PC-9 (cell line): ENCODE measurements at regions of chr14 and their contacts with region 1.

Region 1: GRCh38 chr14:38197001-38197783 is 10.5 kb upstream of the SSTR1 start:
- DNase-seq: no peak
- H3K4me3 ChIP-seq: no peak overlapping the region
- H3K27ac ChIP-seq: no peak overlapping the region
- H3K4me1 ChIP-seq: no peaks in the 10 kb centered on the region
- H3K27me3 ChIP-seq: no peaks in the 10 kb centered on the region
- CTCF ChIP-seq: peak; percentile 77

Region 2: DNA sequence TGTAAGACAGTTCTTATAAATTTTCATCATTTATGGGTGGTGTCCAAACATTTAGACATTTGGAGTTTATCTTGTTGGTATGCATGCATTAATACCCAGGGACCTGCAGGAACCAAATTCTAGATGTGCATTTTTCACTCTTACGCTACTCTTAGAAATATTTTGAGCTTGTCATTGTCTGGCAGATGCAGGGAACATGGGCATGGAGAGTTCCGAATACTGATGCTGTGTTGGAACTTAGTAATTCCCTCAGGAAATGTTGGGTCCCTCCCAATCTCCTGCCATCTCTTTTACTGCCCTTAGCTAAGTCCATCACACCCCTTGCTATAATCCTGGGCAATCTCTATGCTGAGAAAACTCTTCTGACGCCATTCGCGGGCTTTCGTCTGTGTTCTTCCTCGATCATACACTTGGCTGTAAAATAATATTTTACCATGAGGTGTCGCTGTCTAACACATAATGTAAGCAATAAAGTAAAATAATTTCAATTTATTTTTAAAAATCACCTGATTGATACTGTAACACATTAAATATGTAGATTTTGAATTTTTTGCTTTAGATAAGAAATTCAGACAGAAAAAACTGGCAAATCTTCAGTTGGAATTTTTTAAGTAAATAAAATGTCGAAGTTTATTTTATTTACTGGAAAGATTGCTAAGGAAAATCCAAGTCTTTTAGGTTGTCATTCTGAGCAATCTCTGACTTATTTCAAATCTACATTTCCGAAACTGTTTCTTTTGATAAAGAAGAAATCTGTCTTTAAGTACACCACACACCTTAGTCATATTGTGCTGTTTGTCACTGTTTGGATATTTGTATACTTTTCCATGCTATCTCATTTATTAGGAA is 293.6 kb before region 1 on chr14:
- CTCF ChIA-PET with region 1: no interaction called
- POLR2A ChIA-PET with region 1: no interaction called
- intact Hi-C with region 1: loop called (anchors 2 kb)
- DNase-seq: peak in 1 of 2 experiments; percentile 1
- H3K4me3 ChIP-seq: no peak overlapping the region
- H3K27ac ChIP-seq: no peak overlapping the region
- H3K4me1 ChIP-seq: no peaks in the 10 kb centered on the region
- H3K27me3 ChIP-seq: no peaks in the 10 kb centered on the region
- CTCF ChIP-seq: peak; percentile 84

Region 3: DNA sequence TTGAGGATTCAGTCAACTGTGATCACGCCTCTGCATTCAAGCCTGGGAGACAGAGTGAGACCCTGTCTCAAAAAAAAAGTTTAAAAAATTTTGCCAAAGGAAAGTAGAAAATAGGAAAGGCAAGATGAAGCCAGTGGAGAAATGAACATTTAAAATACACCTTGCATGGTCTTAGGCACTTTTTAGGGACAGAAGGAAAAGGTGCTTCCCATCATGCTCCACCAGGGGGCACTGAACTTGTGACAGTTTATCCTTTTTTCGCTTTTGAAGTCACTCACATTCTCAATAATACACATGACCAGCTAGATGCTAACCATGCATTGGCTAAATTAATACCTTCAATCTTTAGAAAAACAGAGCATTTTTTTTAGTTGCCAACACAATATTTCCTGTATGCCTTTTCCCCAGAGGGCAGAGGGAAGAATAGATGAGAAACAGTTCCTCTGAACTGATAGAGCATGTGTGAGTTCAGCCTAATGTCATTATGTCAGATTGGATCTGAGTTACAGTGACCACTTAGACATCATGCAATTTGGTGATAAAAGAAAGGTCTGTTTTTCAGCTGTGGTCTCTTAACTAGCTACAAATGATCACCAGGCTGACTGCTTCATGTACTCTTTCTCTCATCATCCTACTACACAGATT is 211.2 kb before region 1 on chr14:
- CTCF ChIA-PET with region 1: no interaction called
- POLR2A ChIA-PET with region 1: no interaction called
- intact Hi-C with region 1: loop called (anchors 5 kb)
- DNase-seq: peak in 1 of 2 experiments; percentile 15
- H3K4me3 ChIP-seq: no peak overlapping the region
- H3K27ac ChIP-seq: no peak overlapping the region
- H3K4me1 ChIP-seq: no peaks in the 10 kb centered on the region
- H3K27me3 ChIP-seq: no peaks in the 10 kb centered on the region
- CTCF ChIP-seq: peak; percentile 70

Region 4: GRCh38 chr14:38224338-38224737 is 27.1 kb after region 1 on chr14:
- CTCF ChIA-PET with region 1: interaction called, 14 read pairs
- POLR2A ChIA-PET with region 1: no interaction called
- intact Hi-C with region 1: no loop called
- DNase-seq: no peak
- H3K4me3 ChIP-seq: no peak overlapping the region
- H3K27ac ChIP-seq: no peak overlapping the region
- H3K4me1 ChIP-seq: no peaks in the 10 kb centered on the region
- H3K27me3 ChIP-seq: no peaks in the 10 kb centered on the region
- CTCF ChIP-seq: no peak